ENCODE measurements at regions of chr20 and their contacts with region 1.

Region 1: DNA sequence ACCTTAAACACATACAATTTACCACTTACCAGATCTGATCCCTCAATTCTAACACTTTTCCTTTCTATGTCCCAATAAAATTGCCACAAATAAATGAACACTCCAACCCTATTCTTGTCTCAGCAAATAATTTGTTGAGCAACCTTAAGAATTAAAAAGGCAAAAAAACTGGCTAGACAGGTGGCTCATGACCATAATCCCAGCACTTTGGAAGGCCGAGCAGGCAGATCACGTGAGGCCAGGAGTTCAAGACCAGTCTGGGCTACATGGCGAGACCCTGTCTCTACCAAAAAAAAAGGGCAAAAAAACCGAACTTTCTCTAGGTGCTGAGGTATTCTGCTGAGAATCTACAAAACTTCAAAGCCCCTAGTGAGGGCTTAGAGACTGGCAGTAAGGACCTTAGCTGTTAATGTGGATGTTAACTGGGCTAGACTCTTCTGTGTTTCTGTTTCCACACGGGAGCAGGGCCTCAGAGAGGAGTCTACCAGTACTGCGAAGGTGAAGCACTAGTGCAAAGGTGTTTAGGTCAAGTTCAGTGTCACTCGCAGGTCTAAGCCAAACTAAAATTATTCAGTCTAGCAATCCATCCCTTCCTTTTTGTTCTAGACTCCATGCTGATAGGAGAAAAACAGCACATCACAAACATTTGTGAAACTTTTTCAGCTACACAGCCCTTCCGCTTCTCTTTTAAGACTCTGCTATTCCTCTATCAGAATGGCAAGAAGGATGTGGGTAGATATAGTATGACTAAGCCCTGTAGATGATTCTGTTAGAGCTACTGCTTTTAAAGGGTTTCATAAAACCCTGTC is 2.6 kb downstream of the FASTKD5 start:
- DNase-seq: peak; percentile 42
- H3K4me3 Mint-ChIP-seq: peak overlapping the region; percentile 66
- H3K27ac Mint-ChIP-seq: peak overlapping the region; percentile 91
- H3K4me1 Mint-ChIP-seq: peaks cover 53% of the 10 kb centered on the region
- H3K27me3 Mint-ChIP-seq: no peaks in the 10 kb centered on the region

Region 2: GRCh38 chr20:2946988-2947961 is 209.7 kb before region 1 on chr20:
- CTCF ChIA-PET with region 1: no interaction called
- intact Hi-C with region 1: no loop called
- DNase-seq: no peak
- H3K4me3 Mint-ChIP-seq: no peak overlapping the region
- H3K27ac Mint-ChIP-seq: no peak overlapping the region
- H3K4me1 Mint-ChIP-seq: peaks cover 11% of the 10 kb centered on the region
- H3K27me3 Mint-ChIP-seq: no peaks in the 10 kb centered on the region

Region 3: GRCh38 chr20:3077618-3078134 is 79.3 kb before region 1 on chr20:
- CTCF ChIA-PET with region 1: interaction called, 4 read pairs
- intact Hi-C with region 1: loop called (anchors 5 kb)
- DNase-seq: peak; percentile 49
- H3K4me3 Mint-ChIP-seq: peak overlapping the region; percentile 50
- H3K27ac Mint-ChIP-seq: no peak overlapping the region
- H3K4me1 Mint-ChIP-seq: peaks cover 26% of the 10 kb centered on the region
- H3K27me3 Mint-ChIP-seq: peaks cover 17% of the 10 kb centered on the region

Region 4: GRCh38 chr20:3123542-3123941 is 33.5 kb before region 1 on chr20:
- CTCF ChIA-PET with region 1: interaction called, 6 read pairs
- intact Hi-C with region 1: loop called (anchors 1 kb)
- DNase-seq: no peak
- H3K4me3 Mint-ChIP-seq: no peak overlapping the region
- H3K27ac Mint-ChIP-seq: peak overlapping the region; percentile 92
- H3K4me1 Mint-ChIP-seq: peaks cover 39% of the 10 kb centered on the region
- H3K27me3 Mint-ChIP-seq: no peaks in the 10 kb centered on the region

Region 5: GRCh38 chr20:3173610-3174441 is 16.8 kb after region 1 on chr20:
- CTCF ChIA-PET with region 1: interaction called, 6 read pairs
- intact Hi-C with region 1: loop called (anchors 1 kb)
- DNase-seq: peak; percentile 89
- H3K4me3 Mint-ChIP-seq: peak overlapping the region; percentile 83
- H3K27ac Mint-ChIP-seq: no peak overlapping the region
- H3K4me1 Mint-ChIP-seq: peaks cover 12% of the 10 kb centered on the region
- H3K27me3 Mint-ChIP-seq: peaks cover 11% of the 10 kb centered on the region

Region 6: DNA sequence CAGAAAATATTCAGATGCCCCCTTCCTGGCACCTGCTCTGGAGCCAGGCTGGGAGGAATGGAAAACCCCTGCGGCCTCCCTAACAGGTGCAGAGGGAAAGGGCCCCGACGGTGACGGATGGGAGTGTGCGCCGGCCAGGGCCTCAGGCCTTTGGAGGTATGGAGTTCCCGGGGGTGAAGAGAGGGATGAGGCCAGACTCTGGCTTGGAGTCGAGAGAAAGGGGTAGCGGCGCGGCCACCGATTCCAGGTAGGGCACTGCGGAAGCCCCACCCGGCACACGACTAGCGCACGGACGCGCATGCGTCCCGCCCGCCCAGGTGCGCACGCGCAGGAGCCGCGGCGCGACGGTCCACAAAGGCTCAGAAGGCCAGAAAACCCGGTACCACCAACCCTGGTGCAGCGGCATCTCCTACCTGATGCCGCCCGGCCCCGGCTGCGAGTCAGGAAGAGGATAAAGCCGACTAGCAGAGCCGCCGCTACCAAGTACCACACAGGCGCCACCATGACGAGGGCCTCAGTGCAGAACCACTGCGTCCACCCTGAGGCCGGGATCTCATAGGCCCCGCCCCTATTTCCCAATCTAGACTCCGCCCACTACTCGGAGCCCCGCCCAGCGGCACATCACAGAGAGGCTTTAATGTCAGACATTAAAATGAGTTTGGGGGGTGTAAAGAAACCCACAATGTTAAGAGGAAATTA is 47.3 kb after region 1 on chr20 and contains the start of gene DDRGK1:
- CTCF ChIA-PET with region 1: interaction called, 4 read pairs
- intact Hi-C with region 1: loop called (anchors 2 kb)
- DNase-seq: peak; percentile 96
- H3K4me3 Mint-ChIP-seq: peak within 1 kb of the TSS; percentile 97
- H3K27ac Mint-ChIP-seq: peak within 1 kb of the TSS; percentile 97
- H3K4me1 Mint-ChIP-seq: peaks cover 18% of the 10 kb centered on the region
- H3K27me3 Mint-ChIP-seq: no peaks in the 10 kb centered on the region
- total RNA-seq, gene DDRGK1: 78.2 to 79.5 TPM

Region 7: DNA sequence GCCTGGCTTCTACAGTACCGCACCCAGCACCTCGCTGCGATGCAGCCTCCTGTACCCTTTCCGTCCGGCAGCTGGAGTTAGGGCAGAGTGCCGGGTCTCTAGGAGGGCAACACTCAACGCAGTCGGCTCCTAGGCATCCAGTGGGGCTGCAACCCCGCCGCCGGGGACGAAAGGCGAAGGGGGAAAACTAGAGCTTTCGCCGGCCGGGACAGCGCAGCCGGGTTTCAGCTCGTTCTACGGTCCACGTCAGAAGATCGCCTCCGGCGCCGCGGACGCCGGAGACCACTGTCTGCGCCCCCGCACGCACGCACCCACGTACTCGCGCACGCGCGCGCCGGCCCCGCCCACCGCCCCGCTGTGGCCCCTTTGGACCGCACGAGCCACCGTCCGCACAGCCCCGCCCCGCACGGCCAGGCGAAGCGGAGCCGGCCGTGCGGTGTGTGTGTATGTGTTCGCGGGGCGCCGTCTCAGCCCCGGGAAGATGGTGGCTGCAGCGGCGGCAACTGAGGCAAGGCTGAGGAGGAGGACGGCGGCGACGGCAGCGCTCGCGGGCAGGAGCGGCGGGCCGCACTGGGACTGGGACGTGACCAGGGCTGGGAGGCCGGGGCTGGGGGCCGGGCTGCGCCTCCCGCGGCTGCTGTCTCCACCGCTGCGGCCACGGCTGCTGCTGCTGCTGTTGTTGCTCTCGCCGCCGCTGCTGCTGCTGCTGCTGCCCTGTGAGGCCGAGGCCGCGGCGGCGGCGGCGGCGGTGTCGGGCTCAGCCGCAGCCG is 313.8 kb after region 1 on chr20 and contains the start of gene ATRN:
- CTCF ChIA-PET with region 1: no interaction called
- intact Hi-C with region 1: loop called (anchors 5 kb)
- DNase-seq: peak; percentile 88
- H3K4me3 Mint-ChIP-seq: peak within 1 kb of the TSS; percentile 86
- H3K27ac Mint-ChIP-seq: no peak within 1 kb of the TSS
- H3K4me1 Mint-ChIP-seq: peaks cover 29% of the 10 kb centered on the region
- H3K27me3 Mint-ChIP-seq: no peaks in the 10 kb centered on the region
- total RNA-seq, gene ATRN: 5.1 TPM

Region 8: DNA sequence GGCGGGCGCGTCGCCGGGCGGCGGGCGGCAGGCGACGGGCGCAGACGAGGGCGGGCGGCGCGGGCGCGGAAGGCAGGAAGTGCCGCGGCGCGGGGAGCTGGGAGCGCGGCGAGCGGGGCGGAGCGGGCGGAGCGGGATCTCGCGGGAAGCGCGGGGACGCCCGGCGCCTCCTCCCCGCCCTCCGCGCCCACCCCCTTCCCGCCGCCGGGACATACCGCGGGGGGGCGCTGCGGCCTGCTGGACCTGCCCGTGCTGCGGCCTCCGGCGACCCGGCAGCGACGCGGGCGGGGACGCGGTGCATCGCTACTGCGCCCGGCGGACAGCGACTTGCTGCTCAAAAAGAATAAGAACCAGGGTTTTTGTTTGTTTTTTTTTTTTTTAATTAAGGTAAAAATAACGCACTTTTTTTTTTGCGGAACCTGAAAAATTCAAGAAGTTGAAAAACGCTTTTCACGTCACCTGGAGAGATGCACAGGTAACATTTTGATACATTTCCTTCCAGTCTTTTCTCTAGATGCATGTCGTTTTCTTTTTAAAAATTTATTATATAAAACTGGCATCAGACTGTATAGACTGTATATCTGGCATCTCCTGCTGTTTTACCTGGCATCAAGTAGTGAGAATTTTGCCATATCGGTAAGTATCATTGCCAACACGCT is 629.8 kb after region 1 on chr20 and contains the start of gene CENPB:
- CTCF ChIA-PET with region 1: no interaction called
- intact Hi-C with region 1: no loop called
- DNase-seq: peak; percentile 91
- H3K4me3 Mint-ChIP-seq: peak within 1 kb of the TSS; percentile 83
- H3K27ac Mint-ChIP-seq: peak within 1 kb of the TSS; percentile 80
- H3K4me1 Mint-ChIP-seq: peaks cover 39% of the 10 kb centered on the region
- H3K27me3 Mint-ChIP-seq: no peaks in the 10 kb centered on the region
- total RNA-seq, gene CENPB: 29.1 to 30.3 TPM